AG04450 (cell line): ENCODE measurements at regions of chr15 and their contacts with region 1.

Region 1: GRCh38 chr15:62254137-62254934 is 89.3 kb upstream of the C2CD4B start:
- DNase-seq: peak; percentile 10
- H3K4me3 ChIP-seq: no peak overlapping the region
- H3K27ac ChIP-seq: no peak overlapping the region
- H3K27me3 ChIP-seq: peaks cover 7% of the 10 kb centered on the region
- CTCF ChIP-seq: peak; percentile 85

Region 2: GRCh38 chr15:61051569-61052031 is 1202.7 kb before region 1 on chr15:
- CTCF ChIA-PET with region 1: no interaction called
- POLR2A ChIA-PET with region 1: no interaction called
- DNase-seq: peak; percentile 26
- H3K4me3 ChIP-seq: no peak overlapping the region
- H3K27ac ChIP-seq: no peak overlapping the region
- H3K27me3 ChIP-seq: peaks cover 2% of the 10 kb centered on the region
- CTCF ChIP-seq: peak; percentile 79

Region 3: DNA sequence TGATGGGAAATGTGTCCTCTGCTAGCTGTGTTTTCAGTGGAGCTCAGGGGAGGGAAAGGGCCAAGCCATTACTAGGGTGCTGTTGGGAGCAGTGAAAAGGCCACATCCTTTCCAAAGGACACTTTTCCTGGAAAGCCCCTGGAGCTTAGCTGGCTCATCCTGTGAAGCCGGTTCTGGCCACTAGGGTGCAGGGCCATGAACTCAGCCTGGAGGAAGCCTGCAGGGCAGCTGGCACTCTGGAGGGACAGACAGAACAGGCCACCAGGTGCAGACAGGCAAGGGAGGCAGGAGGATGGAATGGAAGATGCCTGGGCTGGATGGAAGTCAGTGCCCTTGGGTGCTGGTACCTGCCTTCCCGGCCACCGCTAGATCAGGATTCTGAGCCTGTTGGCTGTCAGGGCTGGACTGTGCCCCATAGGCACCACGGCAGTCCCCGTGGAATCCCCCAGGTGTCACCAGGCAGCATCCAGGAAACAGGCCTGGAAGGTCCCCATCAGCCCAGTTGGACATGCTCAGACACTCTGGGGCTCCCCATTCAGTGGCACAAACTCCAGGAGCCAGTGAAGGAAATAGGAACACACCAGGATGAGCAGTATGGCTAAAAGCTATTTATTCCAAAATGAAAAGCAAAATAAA is 13.1 kb before region 1 on chr15:
- CTCF ChIA-PET with region 1: interaction called, 16 read pairs
- POLR2A ChIA-PET with region 1: no interaction called
- DNase-seq: no peak
- H3K4me3 ChIP-seq: no peak overlapping the region
- H3K27ac ChIP-seq: no peak overlapping the region
- H3K27me3 ChIP-seq: peaks cover 9% of the 10 kb centered on the region
- CTCF ChIP-seq: peak; percentile 36; the same call in 1 of the 2 replicates